Calu3 (cell line): ENCODE measurements at regions of chr15 and their contacts with region 1.

Region 1: DNA sequence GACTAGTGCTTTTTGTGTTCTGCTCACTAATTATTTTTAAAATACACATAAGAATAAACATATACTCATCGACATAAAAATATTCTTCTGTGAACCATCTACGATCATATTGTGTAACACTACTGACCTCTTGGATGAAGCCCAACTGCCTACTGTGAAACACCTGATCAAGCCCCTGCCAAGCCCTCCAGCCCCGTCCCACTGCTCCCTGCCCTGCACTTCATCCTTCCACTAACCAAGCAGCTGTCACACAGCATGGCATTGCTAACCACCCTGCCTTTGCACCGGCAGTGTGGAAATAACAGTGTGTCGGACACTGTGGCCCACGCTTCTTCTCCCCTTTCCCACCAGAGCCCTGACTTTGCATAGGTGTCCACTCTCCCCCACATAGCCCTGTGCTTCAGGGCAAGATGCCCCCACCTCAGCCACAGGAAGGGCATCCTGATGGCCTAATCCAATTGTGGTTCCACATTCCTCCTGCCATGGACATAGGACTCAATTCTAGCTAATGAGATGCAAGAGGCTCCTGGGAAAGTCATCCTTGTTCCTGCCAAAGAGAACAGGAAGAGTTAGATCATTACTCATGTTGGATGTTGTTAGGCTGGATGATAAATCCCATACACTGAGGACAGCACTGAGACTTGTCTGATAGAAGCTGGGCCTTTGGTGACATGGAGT is 35.0 kb upstream of the ARID3B start:
- DNase-seq: no peak
- H3K4me3 Mint-ChIP-seq: no peak overlapping the region
- H3K27ac Mint-ChIP-seq: no peak overlapping the region
- H3K4me1 Mint-ChIP-seq: no peaks in the 10 kb centered on the region
- H3K27me3 Mint-ChIP-seq: no peaks in the 10 kb centered on the region
- CTCF ChIP-seq: no peak

Region 2: DNA sequence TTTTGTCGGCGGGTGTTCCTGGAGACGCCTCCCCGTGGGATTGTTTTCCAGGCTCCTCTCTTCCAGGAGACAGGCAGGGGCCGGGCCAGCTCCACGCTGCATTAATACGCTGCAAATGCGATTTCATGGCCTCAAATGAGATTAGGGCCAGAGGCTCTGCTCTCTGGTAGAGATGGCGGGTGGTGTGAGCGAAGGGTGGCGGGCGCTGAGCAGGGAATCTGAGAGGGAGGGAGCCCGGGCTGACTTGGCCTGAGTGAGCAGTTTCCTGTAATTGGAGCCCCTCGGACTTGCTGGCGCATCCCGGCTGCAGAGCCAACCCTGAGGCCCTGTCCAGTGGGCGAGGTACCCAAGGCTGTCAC is 277.3 kb before region 1 on chr15:
- CTCF ChIA-PET with region 1: no interaction called
- intact Hi-C with region 1: no loop called
- DNase-seq: no peak
- H3K4me3 Mint-ChIP-seq: no peak overlapping the region
- H3K27ac Mint-ChIP-seq: no peak overlapping the region
- H3K4me1 Mint-ChIP-seq: peaks cover 20% of the 10 kb centered on the region
- H3K27me3 Mint-ChIP-seq: peaks cover 12% of the 10 kb centered on the region
- CTCF ChIP-seq: no peak

Region 3: GRCh38 chr15:74365611-74366440 is 140.2 kb before region 1 on chr15:
- CTCF ChIA-PET with region 1: no interaction called
- intact Hi-C with region 1: no loop called
- DNase-seq: no peak
- H3K4me3 Mint-ChIP-seq: no peak overlapping the region
- H3K27ac Mint-ChIP-seq: no peak overlapping the region
- H3K4me1 Mint-ChIP-seq: peaks cover 10% of the 10 kb centered on the region
- H3K27me3 Mint-ChIP-seq: peaks cover 90% of the 10 kb centered on the region
- CTCF ChIP-seq: no peak

Region 4: GRCh38 chr15:74489518-74490338 is 16.2 kb before region 1 on chr15:
- CTCF ChIA-PET with region 1: interaction called, 12 read pairs
- intact Hi-C with region 1: no loop called
- DNase-seq: peak; percentile 76
- H3K4me3 Mint-ChIP-seq: no peak overlapping the region
- H3K27ac Mint-ChIP-seq: no peak overlapping the region
- H3K4me1 Mint-ChIP-seq: peaks cover 10% of the 10 kb centered on the region
- H3K27me3 Mint-ChIP-seq: no peaks in the 10 kb centered on the region
- CTCF ChIP-seq: peak; percentile 67

Region 5: DNA sequence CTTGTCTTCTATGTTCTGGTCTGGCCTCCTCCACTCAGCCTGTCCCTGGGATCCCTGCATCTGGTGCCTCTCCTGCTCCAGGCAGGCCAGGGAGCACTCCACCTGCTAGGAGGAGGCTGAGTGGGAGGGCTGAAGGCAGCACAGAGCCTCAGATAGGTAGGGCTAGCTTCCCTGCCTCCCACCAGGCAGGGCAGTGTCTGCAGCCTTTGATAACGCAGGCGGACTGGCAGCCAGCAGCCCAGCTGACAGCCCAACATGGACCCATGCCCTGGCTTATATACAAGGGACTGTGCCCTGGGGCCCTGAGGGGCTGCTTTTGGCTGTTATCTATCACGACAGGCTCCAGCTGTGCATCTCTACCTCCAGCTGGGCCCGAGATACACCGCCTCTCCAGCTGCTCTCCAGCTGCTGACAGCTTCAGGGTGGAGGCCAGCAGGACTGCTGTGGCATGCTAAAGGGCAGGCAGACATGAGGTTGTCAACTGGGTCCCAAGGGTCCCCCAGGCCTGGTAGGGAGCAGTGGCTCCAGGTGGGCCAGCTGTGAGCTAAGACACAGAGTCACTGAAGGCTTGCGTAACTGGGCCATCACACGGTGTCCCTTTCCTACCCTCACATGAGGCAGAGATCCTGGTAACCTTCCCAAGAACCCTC is 104.5 kb after region 1 on chr15:
- CTCF ChIA-PET with region 1: no interaction called
- intact Hi-C with region 1: no loop called
- DNase-seq: no peak
- H3K4me3 Mint-ChIP-seq: no peak overlapping the region
- H3K27ac Mint-ChIP-seq: no peak overlapping the region
- H3K4me1 Mint-ChIP-seq: no peaks in the 10 kb centered on the region
- H3K27me3 Mint-ChIP-seq: peaks cover 74% of the 10 kb centered on the region
- CTCF ChIP-seq: no peak